Activated naive CD4-positive, alpha-beta T cell treated with anti-CD3 and anti-CD28 coated beads, Interleukin-2, amount 10 ng/mL, durations not matched to agents 7 days and 5 days (primary cell): ENCODE measurements at regions of chr17 and their contacts with region 1.

Region 1: GRCh38 chr17:7136266-7136877 is 21.8 kb upstream of the ASGR2 start:
- DNase-seq: peak; percentile 84
- H3K4me3 Mint-ChIP-seq: no peak overlapping the region
- H3K27ac Mint-ChIP-seq: no peak overlapping the region
- H3K4me1 Mint-ChIP-seq: peaks cover 22% of the 10 kb centered on the region
- H3K27me3 Mint-ChIP-seq: peaks cover 55% of the 10 kb centered on the region

Region 2: GRCh38 chr17:7045909-7046724 is 90.3 kb before region 1 on chr17:
- CTCF ChIA-PET with region 1: interaction called, 270 read pairs
- DNase-seq: peak; percentile 64
- H3K4me3 Mint-ChIP-seq: peak overlapping the region; percentile 65
- H3K27ac Mint-ChIP-seq: peak overlapping the region; percentile 71
- H3K4me1 Mint-ChIP-seq: peaks cover 42% of the 10 kb centered on the region
- H3K27me3 Mint-ChIP-seq: peaks cover 60% of the 10 kb centered on the region

Region 3: GRCh38 chr17:7177196-7177953 is 41.0 kb after region 1 on chr17:
- CTCF ChIA-PET with region 1: interaction called, 21 read pairs
- DNase-seq: peak; percentile 79
- H3K4me3 Mint-ChIP-seq: peak overlapping the region; percentile 34
- H3K27ac Mint-ChIP-seq: no peak overlapping the region
- H3K4me1 Mint-ChIP-seq: peaks cover 14% of the 10 kb centered on the region
- H3K27me3 Mint-ChIP-seq: peaks cover 11% of the 10 kb centered on the region